ENCODE measurements at regions of chr19 and their contacts with region 1.

Region 1: DNA sequence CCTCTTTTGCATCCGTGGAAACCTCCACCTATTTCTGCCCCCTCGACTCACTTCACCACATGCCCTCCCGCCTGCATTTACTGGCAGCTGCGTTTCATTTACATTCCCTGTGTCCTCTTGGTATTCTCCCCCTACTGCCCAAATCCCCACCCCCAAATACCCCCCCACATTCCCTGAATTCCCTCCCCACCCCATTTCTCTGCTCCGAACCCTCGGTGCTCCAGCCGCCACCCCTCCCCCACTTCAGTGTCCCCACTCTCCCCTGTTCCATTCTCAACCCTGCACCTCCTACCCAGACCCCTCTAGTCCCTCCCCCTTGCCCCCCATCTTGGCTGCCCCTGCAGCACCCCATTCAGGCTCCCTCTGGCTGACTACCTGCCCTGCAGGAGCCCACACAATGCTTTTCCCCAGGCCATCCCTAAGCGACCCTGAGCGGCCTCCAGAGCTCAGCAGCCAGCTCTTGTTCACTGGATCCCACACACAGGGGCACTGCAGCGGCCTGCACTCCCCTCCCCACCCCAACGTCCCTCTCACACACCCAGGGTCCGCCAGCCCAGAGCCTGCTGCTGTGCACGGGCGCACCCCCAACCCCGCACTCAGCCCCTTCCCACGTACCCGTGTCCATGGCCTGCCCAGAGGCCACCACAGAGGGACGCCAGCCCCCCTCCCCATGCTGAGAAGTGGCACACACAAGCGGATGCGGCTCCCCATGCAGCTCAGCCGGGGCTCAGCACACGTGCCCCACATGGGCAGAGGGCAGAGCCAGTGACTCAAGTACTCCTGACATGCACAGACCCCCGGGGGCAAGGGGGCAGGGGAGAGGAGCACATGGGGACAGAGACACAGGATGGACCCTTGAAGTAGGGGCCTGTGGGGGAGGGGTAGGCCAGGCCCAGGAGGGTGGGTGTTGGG is 26.3 kb downstream of the SHANK1 start:
- DNase-seq: no peak
- ATAC-seq: no peak
- H3K4me3 ChIP-seq: no peak overlapping the region
- H3K27ac ChIP-seq: no peak overlapping the region
- H3K4me1 ChIP-seq: no peaks in the 10 kb centered on the region
- H3K27me3 ChIP-seq: no peaks in the 10 kb centered on the region
- CTCF ChIP-seq: no peak

Region 2: DNA sequence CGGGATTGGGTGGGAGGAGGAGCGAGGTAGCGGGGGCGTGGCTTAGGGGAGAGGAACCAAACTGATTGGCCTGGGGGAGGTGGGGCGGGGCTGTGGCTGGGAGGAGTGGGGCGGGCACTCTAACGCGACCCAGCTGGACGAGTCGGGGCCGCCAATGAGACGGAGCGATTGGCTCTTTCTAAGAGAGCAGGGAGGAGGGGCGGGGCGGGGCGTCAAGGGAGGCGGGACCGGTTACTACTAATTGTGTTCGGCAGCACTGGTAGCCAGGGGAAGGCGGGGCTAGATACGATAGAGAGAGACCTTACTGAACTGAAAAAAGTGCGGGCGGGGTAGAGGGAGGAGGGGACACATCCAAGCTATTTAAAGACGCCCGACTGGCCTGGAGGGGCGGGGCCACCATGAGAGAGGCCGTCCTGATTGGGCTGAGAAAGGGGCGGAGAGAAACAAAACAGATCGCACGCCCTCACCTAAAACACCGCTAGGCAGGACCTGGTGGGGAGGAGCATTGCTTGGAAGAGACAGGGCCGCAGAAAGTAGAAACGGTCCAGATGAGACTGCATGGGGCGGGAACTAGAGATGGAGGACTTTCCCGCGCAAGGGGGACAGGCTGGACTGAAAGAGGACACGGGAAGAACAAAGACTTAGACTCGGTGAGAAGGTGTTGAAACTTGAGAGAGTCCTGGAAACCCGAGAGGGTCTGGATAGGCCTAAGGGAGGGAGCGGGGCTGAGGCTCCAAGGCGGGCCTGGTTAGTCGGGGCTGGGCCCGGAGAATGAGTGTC is 364.0 kb before region 1 on chr19 and contains the start of gene KCNC3:
- CTCF ChIA-PET with region 1: no interaction called
- POLR2A ChIA-PET with region 1: interaction called, 10 read pairs
- in situ Hi-C with region 1: no loop called
- intact Hi-C with region 1: no loop called
- DNase-seq: peak; percentile 92
- ATAC-seq: peak; percentile 78
- H3K4me3 ChIP-seq: peak within 1 kb of the TSS; percentile 49 to 63
- H3K27ac ChIP-seq: peak within 1 kb of the TSS; percentile 71
- H3K4me1 ChIP-seq: peaks cover 12% of the 10 kb centered on the region
- H3K27me3 ChIP-seq: no peaks in the 10 kb centered on the region
- CTCF ChIP-seq: no peak
- total RNA-seq, gene KCNC3: 10.8 TPM

Region 3: GRCh38 chr19:50383852-50384684 is 309.3 kb before region 1 on chr19 and contains the start of gene POLD1:
- CTCF ChIA-PET with region 1: no interaction called
- POLR2A ChIA-PET with region 1: no interaction called
- in situ Hi-C with region 1: no loop called
- intact Hi-C with region 1: no loop called
- DNase-seq: peak; percentile 78
- ATAC-seq: peak; percentile 93
- H3K4me3 ChIP-seq: peak within 1 kb of the TSS; percentile 72 to 91
- H3K27ac ChIP-seq: peak within 1 kb of the TSS; percentile 87
- H3K4me1 ChIP-seq: peaks cover 4% of the 10 kb centered on the region
- H3K27me3 ChIP-seq: no peaks in the 10 kb centered on the region
- CTCF ChIP-seq: no peak
- total RNA-seq, gene POLD1: 71.7 TPM

Region 4: GRCh38 chr19:50658441-50659317 is 34.6 kb before region 1 on chr19:
- CTCF ChIA-PET with region 1: no interaction called
- POLR2A ChIA-PET with region 1: no interaction called
- in situ Hi-C with region 1: no loop called
- intact Hi-C with region 1: no loop called
- DNase-seq: no peak
- ATAC-seq: peak; percentile 49
- H3K4me3 ChIP-seq: peak overlapping the region; percentile 30 to 43
- H3K27ac ChIP-seq: no peak overlapping the region
- H3K4me1 ChIP-seq: no peaks in the 10 kb centered on the region
- H3K27me3 ChIP-seq: no peaks in the 10 kb centered on the region
- CTCF ChIP-seq: no peak

Region 5: GRCh38 chr19:50705422-50706019 is 12.2 kb after region 1 on chr19:
- CTCF ChIA-PET with region 1: interaction called, 12 read pairs
- POLR2A ChIA-PET with region 1: no interaction called
- in situ Hi-C with region 1: no loop called
- intact Hi-C with region 1: no loop called
- DNase-seq: peak; percentile 42
- ATAC-seq: peak; percentile 87
- H3K4me3 ChIP-seq: no peak overlapping the region
- H3K27ac ChIP-seq: no peak overlapping the region
- H3K4me1 ChIP-seq: no peaks in the 10 kb centered on the region
- H3K27me3 ChIP-seq: no peaks in the 10 kb centered on the region
- CTCF ChIP-seq: peak; percentile 81

Region 6: GRCh38 chr19:50718255-50719118 is 25.2 kb after region 1 on chr19:
- CTCF ChIA-PET with region 1: interaction called, 17 read pairs
- POLR2A ChIA-PET with region 1: no interaction called
- in situ Hi-C with region 1: no loop called
- intact Hi-C with region 1: no loop called
- DNase-seq: no peak
- ATAC-seq: no peak
- H3K4me3 ChIP-seq: no peak overlapping the region; a peak in 1 of 4 replicates
- H3K27ac ChIP-seq: no peak overlapping the region
- H3K4me1 ChIP-seq: no peaks in the 10 kb centered on the region
- H3K27me3 ChIP-seq: peaks cover 2% of the 10 kb centered on the region; the same call in 1 of the 2 replicates
- CTCF ChIP-seq: no peak

Measured in Panc1 (cell line).